AG04450 (cell line): ENCODE measurements at regions of chr1 and their contacts with region 1.

Region 1: GRCh38 chr1:181013144-181013543 is 9.5 kb downstream of the STX6 start:
- DNase-seq: no peak
- H3K4me3 ChIP-seq: no peak overlapping the region
- H3K27ac ChIP-seq: no peak overlapping the region
- H3K27me3 ChIP-seq: no peaks in the 10 kb centered on the region
- CTCF ChIP-seq: no peak

Region 2: GRCh38 chr1:180527101-180527669 is 486.0 kb before region 1 on chr1:
- CTCF ChIA-PET with region 1: interaction called, 12 read pairs
- POLR2A ChIA-PET with region 1: no interaction called
- DNase-seq: no peak
- H3K4me3 ChIP-seq: no peak overlapping the region
- H3K27ac ChIP-seq: no peak overlapping the region
- H3K27me3 ChIP-seq: no peaks in the 10 kb centered on the region
- CTCF ChIP-seq: no peak

Region 3: DNA sequence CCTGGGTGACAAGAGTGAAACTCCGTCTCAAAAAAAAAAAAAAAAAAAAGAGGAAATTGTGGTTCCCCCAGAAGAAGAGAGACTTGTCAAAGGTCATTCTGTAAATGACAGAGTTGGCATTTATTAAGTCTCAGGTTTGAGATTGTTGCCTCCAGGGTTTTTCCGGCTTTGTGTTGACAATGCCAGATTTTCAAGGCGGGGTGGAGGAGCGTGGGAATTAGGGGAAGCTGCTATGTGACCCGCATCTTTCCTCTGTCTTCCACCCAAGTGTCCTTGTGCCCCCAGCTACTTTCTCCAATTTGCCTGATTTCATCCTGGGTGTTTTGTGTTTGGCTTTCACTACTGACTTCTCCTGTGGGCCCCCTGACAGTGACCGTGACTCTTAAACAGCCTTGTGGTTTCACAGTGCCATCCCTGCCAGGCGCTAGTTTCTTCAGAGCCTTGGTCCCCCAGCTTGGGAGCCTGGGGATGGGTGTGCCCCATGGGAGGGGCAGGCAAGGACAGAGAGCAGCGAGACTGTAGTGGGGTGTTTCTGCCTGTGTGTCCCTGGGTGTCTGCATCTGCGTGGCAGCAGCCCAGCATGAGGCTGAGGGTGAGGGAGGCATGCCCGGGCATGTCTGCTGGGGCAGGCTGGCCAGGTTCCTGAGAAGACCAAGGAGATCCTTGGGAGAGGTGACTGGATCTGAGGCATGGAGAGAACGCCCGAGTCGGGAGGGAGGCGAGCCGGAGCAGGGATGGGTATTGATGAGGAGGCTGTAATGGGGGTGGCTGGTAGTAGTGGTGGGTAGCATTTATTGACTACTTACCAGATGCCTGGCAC is 121.6 kb after region 1 on chr1:
- CTCF ChIA-PET with region 1: no interaction called
- POLR2A ChIA-PET with region 1: no interaction called
- DNase-seq: peak; percentile 38
- H3K4me3 ChIP-seq: no peak overlapping the region
- H3K27ac ChIP-seq: peak overlapping the region; percentile 99
- H3K27me3 ChIP-seq: no peaks in the 10 kb centered on the region
- CTCF ChIP-seq: no peak